Vagina (tissue), 2 donors: ENCODE measurements at regions of chr4 and their contacts with region 1.

Region 1: DNA sequence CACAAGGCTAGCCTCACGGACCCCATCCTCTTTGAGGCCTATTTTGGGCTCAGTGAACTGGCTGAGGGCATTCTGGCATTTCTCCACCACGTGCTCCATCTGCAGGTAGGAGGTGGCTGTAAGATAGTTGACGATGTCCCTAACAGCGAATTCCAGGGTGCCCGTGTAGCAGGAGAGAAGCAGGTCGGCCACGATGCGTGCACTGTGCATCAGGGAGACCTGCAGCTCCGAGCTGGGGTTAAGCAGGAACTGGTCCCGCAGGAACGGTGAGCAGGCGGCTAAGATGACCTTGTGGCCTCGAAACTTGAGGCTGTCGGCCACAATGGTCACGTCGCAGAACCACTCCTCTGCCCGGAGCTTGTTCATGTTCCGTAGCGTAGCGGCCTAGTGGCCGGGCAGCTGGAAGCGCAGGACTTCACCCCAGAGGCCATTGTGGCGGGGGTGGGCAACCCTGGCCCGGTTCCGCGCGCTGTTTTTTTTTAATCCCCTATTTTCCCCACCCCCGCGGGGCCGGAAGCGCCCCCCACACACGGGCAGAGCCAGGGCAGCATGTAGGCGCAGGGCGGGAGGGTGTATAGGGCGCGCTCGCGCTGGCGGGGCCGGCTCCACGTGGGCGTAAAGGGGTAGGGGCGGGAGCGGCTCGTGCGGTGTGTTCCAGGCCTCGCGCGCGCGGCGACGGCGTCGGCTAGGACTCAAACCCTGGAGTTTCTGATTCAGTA is 73.2 kb downstream of the UBE2K start:
- DNase-seq: no peak
- H3K4me3 ChIP-seq: no peak overlapping the region
- H3K27ac ChIP-seq: no peak overlapping the region
- H3K4me1 ChIP-seq: no peaks in the 10 kb centered on the region
- H3K27me3 ChIP-seq: no peaks in the 10 kb centered on the region
- CTCF ChIP-seq: no peak
- POLR2A ChIP-seq: no peak

Region 2: DNA sequence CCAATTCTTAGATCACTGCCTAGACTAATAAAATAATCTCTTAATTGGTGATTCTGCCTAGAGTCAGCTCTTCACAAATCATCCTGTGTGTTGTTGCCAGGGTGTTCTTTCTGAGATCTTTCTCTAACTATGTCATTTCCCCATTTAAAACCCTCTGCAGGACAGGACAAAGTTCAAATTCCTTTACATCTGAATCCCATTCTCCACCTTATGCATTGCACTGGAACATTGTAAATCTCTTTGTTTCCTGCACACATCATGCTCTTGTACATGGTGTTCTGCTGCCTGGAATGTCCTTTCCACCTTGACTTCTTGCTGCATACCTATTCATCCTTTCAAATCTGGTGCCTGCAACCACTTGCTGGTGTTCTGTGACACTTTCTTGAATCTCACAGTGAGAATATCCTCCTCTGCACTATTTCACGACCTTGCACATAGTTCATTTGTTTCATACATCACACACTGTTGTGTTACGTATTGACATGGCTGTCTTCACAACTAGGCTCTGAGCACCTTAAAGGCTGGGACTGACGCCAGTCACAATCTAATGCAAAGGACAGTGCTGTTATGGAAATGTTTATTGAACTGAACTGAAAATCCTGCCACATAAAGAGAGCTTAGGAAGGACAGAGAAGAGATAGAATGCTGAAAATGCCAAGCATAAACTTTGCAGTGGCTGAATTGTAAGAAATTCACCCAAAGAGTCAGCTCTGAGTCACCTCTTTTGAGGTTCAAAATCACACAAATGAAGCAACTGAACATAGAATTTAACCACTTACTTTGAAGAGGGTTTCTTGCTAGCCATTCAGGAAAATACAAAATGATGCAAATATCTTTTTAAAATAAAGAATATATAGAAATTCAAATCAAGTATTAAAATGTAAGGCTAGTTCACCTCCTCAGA is 106.1 kb before region 1 on chr4:
- intact Hi-C with region 1: loop called (anchors 5 kb)
- DNase-seq: no peak
- H3K4me3 ChIP-seq: no peak overlapping the region
- H3K27ac ChIP-seq: no peak overlapping the region
- H3K4me1 ChIP-seq: no peaks in the 10 kb centered on the region
- H3K27me3 ChIP-seq: no peaks in the 10 kb centered on the region
- CTCF ChIP-seq: no peak
- POLR2A ChIP-seq: no peak